ENCODE measurements at regions of chr19 and their contacts with region 1.

Region 1: DNA sequence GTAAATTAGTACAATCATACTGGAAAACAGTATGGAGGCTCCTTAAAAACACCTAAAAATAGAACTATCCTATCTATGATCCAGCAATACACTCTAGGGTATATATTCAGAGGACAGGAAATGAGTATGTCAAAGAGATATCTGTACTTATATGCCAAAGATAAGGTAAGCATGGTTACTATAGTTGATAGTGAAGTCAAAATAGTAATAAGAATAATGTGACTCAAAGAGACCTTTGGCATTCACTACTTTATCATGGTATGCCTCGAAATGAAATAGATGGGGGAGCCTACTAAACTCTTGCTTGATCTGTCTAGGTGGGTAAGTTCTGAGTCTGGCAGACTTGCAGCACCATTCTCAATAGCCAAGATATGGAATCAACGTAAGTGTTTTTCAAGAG is 30.3 kb downstream of the FXYD5 start:
- DNase-seq: no peak
- H3K4me3 ChIP-seq: no peak overlapping the region
- H3K4me3 Mint-ChIP-seq: no peak overlapping the region
- H3K27ac ChIP-seq: no peak overlapping the region
- H3K27ac Mint-ChIP-seq: no peak overlapping the region
- H3K4me1 ChIP-seq: no peaks in the 10 kb centered on the region
- H3K4me1 Mint-ChIP-seq: no peaks in the 10 kb centered on the region
- H3K27me3 ChIP-seq: no peaks in the 10 kb centered on the region
- H3K27me3 Mint-ChIP-seq: peaks cover 2 to 5% (median 4%) of the 10 kb centered on the region in 3 donors
- CTCF ChIP-seq: no peak

Region 2: DNA sequence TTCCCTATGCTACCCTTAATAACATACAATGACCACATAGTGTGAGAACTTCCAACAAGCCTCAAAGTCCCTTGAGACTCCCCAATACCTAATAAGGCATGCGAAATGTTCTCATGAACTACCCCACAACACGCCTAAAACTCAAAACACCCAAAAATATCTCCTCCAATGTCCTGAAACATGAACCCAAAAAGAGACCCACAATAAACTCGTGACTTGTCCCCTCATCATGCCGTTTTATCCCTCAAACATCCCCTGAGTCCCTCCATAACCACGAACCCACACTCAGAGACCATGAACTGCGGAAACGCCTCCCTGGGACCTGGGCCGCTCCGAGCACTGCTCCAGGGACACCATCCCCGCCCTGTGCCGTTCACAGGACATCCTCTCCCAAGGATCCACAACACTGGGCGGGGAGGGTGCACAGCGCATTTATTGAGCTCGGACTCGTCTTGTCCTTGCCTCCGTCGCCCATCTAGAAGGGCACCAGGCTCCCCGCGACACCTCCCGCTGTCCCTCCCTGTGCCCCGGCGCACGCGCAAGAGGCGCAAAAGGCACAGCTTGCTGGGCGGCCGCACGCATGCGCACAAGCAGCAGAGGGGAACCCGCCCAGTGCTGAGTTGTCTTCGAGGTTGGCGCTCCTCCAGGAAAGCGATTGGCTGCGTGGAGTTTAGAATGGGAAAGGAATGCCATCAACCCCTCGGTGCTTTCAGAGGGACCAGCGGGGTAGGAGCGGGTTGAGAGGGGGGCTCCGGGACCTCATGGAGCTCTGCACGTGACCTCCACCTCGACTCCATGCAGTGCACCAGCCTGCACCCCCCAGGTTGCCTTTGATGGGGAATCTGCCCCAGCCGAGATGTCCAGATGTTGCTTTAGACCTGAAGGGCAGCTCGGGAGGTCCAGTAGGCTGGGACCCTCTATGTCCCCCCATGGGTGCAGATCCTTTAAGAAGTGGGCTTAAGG is 60.5 kb before region 1 on chr19:
- intact Hi-C with region 1: no loop called
- DNase-seq: peak; percentile 77 to 87 (median 87)
- H3K4me3 ChIP-seq: peak overlapping the region; percentile 44 to 76 (median 48)
- H3K4me3 Mint-ChIP-seq: peak overlapping the region; percentile 76 to 86
- H3K27ac ChIP-seq: peak overlapping the region in 1 of 2 donors; percentile 27
- H3K27ac Mint-ChIP-seq: peak overlapping the region in 5 of 7 donors; percentile 11 to 76 (median 63)
- H3K4me1 ChIP-seq: peaks cover 27 to 34% of the 10 kb centered on the region in 2 donors
- H3K4me1 Mint-ChIP-seq: peaks cover 35% of the 10 kb centered on the region
- H3K27me3 ChIP-seq: no peaks in the 10 kb centered on the region
- H3K27me3 Mint-ChIP-seq: peaks cover 0 to 8% (median 7%) of the 10 kb centered on the region in 3 donors
- CTCF ChIP-seq: no peak

Region 3: DNA sequence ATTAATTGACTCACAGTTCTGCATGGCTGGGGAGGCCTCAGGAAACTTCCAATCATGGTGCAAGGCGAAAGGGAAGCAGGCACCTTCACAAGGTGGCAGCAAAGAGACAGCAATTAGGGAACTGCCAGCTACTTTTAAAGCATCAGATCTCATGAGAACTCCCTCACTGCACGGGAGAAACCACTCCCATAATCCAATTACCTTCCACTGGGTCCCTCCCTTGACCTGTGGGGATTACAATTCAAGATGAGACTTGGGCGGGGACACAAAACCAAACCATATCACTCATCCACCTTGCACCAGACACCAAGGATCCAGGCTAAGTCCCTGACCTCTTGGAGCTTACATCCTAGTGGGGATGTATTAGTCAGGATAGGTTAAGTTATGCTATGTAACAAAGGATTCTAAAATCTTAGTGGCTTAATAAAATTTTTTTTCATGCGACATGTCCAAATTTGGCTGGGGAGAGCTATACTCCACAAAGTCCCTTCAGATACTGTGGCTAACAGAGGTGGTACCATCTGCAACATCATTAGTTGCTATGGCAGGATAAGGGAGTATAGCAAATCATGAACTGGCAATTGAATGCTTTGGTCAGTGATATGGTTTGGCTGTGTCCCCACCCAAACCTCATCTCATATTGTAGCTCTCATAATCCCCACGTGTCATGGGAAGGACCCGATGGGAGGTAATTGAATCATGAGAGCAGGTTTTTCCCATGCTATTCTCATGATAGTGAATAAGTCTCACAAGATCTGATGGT is 51.9 kb after region 1 on chr19:
- intact Hi-C with region 1: loop called in 1 of 2 experiments (anchors 5 kb)
- DNase-seq: no peak
- H3K4me3 ChIP-seq: no peak overlapping the region
- H3K4me3 Mint-ChIP-seq: no peak overlapping the region
- H3K27ac ChIP-seq: no peak overlapping the region
- H3K27ac Mint-ChIP-seq: no peak overlapping the region
- H3K4me1 ChIP-seq: peaks cover 13 to 17% of the 10 kb centered on the region in 2 donors
- H3K4me1 Mint-ChIP-seq: peaks cover 28% of the 10 kb centered on the region
- H3K27me3 ChIP-seq: no peaks in the 10 kb centered on the region
- H3K27me3 Mint-ChIP-seq: peaks cover 3 to 10% (median 3%) of the 10 kb centered on the region in 3 donors
- CTCF ChIP-seq: peak; percentile 2